ENCODE measurements at regions of chr11 and their contacts with region 1.

Region 1: GRCh38 chr11:9137293-9138132 is 46.1 kb upstream of the SCUBE2 start:
- DNase-seq: peak; percentile 77
- H3K4me3 ChIP-seq: no peak overlapping the region; a peak in 1 of 4 replicates
- H3K27ac ChIP-seq: no peak overlapping the region
- H3K4me1 ChIP-seq: peaks cover 0 to 24% of the 10 kb centered on the region in 2 experiments; a peak in 3 of 4 replicates
- H3K27me3 ChIP-seq: no peaks in the 10 kb centered on the region
- CTCF ChIP-seq: peak; percentile 90
- EP300 ChIP-seq: no peak
- RAD21 ChIP-seq: peak; percentile 92

Region 2: DNA sequence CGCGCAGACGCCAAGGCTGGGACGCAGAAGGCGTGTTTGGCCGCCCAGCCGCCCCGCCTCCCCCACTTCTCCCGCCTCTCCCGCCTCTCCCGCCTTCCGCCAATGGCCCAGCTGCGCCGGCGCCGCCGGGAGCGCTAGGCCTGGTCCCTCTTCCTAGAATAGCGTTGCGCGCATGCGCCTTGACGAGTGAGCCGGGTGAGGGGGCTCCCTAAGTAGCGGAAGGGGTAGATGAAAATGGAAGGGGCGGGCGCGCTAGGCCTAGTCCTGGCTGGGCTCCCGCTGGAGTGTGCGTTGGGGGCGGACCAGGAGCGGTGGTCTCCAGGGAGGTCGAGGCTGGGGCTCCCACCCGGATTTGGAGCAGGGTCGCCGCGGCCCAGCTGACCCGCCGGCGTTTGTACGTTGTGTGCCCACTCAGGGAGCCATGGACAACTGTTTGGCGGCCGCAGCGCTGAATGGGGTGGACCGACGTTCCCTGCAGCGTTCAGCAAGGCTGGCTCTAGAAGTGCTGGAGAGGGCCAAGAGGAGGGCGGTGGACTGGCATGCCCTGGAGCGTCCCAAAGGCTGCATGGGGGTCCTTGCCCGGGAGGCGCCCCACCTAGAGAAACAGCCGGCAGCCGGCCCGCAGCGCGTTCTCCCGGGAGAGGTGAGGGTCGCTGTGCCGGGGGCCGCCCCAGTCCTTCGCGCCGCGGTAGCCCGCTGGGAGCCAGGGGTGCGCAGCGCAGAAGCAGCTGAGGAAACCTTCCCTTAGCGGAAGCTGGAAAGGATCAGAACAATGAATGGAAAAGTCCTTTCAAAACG is 226.3 kb before region 1 on chr11 and contains the start of gene AKIP1:
- CTCF ChIA-PET with region 1: interaction called, 32 read pairs
- POLR2A ChIA-PET with region 1: interaction called, 3 read pairs
- DNase-seq: peak; percentile 99
- H3K4me3 ChIP-seq: peak within 1 kb of the TSS; percentile 77 to 90
- H3K27ac ChIP-seq: peak within 1 kb of the TSS; percentile 88 to 89
- H3K4me1 ChIP-seq: peaks cover 17 to 30% of the 10 kb centered on the region in 2 experiments
- H3K27me3 ChIP-seq: no peaks in the 10 kb centered on the region
- CTCF ChIP-seq: no peak
- EP300 ChIP-seq: no peak
- RAD21 ChIP-seq: no peak
- polyA plus RNA-seq, gene AKIP1: 47.9 and 55.3 TPM in 2 replicates

Region 3: GRCh38 chr11:9005087-9005486 is 132.4 kb before region 1 on chr11:
- CTCF ChIA-PET with region 1: interaction called, 11 read pairs
- POLR2A ChIA-PET with region 1: no interaction called
- DNase-seq: no peak
- H3K4me3 ChIP-seq: no peak overlapping the region
- H3K27ac ChIP-seq: no peak overlapping the region
- H3K4me1 ChIP-seq: peaks cover 7 to 8% of the 10 kb centered on the region in 2 experiments; a peak in 2 of 4 replicates
- H3K27me3 ChIP-seq: peaks cover 8% of the 10 kb centered on the region; the same call in 1 of the 2 replicates
- CTCF ChIP-seq: no peak
- EP300 ChIP-seq: no peak
- RAD21 ChIP-seq: no peak

Region 4: GRCh38 chr11:9070749-9071476 is 66.6 kb before region 1 on chr11:
- CTCF ChIA-PET with region 1: interaction called, 13 read pairs
- POLR2A ChIA-PET with region 1: no interaction called
- DNase-seq: no peak
- H3K4me3 ChIP-seq: no peak overlapping the region
- H3K27ac ChIP-seq: no peak overlapping the region
- H3K4me1 ChIP-seq: peaks cover 0 to 24% of the 10 kb centered on the region in 2 experiments; a peak in 2 of 4 replicates
- H3K27me3 ChIP-seq: no peaks in the 10 kb centered on the region
- CTCF ChIP-seq: no peak
- EP300 ChIP-seq: no peak
- RAD21 ChIP-seq: no peak

Region 5: DNA sequence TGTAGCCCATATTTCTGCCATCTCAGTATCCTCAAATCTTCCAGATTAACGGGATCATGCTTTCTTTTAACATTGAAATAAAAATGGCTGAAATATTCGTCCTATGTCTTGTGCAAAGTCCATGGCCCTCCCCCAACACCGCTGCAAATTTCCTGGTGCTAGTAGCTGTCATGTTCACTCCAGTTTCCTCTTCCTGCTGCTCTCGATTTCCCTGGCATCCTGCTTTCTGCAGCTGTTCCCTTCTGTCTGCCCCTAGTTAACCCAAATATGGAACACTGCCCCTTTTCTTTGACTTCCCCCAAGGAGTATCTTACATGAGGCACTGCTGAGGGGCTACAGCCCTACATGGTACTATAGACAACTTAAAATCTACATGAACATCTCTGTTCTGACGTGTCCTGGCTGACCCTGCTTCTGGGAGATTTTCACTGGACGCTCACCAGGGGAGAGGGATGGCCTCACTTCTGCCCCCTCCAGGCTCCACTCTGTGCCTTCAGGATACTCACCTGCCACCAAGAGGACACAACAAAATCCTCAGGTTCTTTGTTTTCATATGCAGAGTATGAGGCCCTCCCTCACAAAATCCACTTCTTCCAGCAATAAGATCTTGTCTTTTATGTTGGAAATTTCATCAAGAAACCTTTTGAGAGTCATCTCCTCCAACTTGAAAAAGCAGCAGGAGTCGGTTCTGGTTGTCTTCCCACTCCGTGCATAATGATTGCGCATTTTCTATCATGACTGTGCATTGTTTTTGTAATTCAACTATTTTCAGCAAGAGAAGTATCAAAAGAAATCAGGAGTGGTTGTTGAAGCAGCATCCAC is 16.6 kb before region 1 on chr11:
- CTCF ChIA-PET with region 1: interaction called, 16 read pairs
- POLR2A ChIA-PET with region 1: no interaction called
- DNase-seq: peak; percentile 34
- H3K4me3 ChIP-seq: no peak overlapping the region
- H3K27ac ChIP-seq: no peak overlapping the region
- H3K4me1 ChIP-seq: no peaks in the 10 kb centered on the region
- H3K27me3 ChIP-seq: no peaks in the 10 kb centered on the region
- CTCF ChIP-seq: peak; percentile 22; the same call in 1 of the 2 replicates
- EP300 ChIP-seq: no peak
- RAD21 ChIP-seq: peak; percentile 40; the same call in 1 of the 2 replicates

Region 6: GRCh38 chr11:9158898-9159391 is 21.4 kb after region 1 on chr11:
- CTCF ChIA-PET with region 1: interaction called, 40 read pairs
- POLR2A ChIA-PET with region 1: no interaction called
- DNase-seq: no peak
- H3K4me3 ChIP-seq: no peak overlapping the region
- H3K27ac ChIP-seq: peak overlapping the region; percentile 20 to 70; a peak in 3 of 4 replicates
- H3K4me1 ChIP-seq: peaks cover 3 to 41% of the 10 kb centered on the region in 2 experiments; a peak in 3 of 4 replicates
- H3K27me3 ChIP-seq: no peaks in the 10 kb centered on the region
- CTCF ChIP-seq: no peak
- EP300 ChIP-seq: no peak
- RAD21 ChIP-seq: no peak